Activated naive CD8-positive, alpha-beta T cell treated with anti-CD3 and anti-CD28 coated beads, Interleukin-2, amount 10 ng/mL, durations not matched to agents 7 days and 5 days (primary cell): ENCODE measurements at regions of chr1 and their contacts with region 1.

Region 1: GRCh38 chr1:67194209-67194863 is 28.1 kb downstream of the IL23R start:
- DNase-seq: no peak
- ATAC-seq: peak; percentile 27
- H3K4me3 Mint-ChIP-seq: peak overlapping the region; percentile 43
- H3K27ac Mint-ChIP-seq: peak overlapping the region; percentile 79
- H3K4me1 Mint-ChIP-seq: peaks cover 21% of the 10 kb centered on the region
- H3K27me3 Mint-ChIP-seq: no peaks in the 10 kb centered on the region

Region 2: DNA sequence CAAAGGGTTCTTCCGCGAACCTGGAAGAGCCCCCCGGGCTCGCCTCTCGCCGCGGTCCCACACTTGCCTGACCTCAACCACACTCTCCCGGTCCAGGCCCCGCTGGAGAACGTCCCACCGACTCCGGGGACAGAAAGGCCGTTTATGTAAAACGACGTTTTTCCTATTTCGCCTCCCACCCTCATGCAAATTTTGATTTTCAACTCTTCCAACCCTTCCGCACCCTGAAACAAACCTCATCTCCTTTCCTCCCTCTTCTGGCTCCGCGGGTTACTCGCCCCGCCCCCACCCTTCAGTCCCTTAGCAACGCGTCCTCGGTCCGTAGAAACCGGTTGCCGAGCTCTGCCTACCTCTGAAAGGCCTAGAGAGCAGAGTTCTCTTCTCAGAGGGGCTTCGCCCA is 59.6 kb before region 1 on chr1 and contains the start of gene C1orf141:
- POLR2A ChIA-PET with region 1: no interaction called
- DNase-seq: no peak
- ATAC-seq: peak; percentile 47
- H3K4me3 Mint-ChIP-seq: peak within 1 kb of the TSS; percentile 73
- H3K27ac Mint-ChIP-seq: peak within 1 kb of the TSS; percentile 0
- H3K4me1 Mint-ChIP-seq: peaks cover 10% of the 10 kb centered on the region
- H3K27me3 Mint-ChIP-seq: peaks cover 12% of the 10 kb centered on the region
- total RNA-seq, gene C1orf141: not detected

Region 3: GRCh38 chr1:67211589-67212563 is 17.5 kb after region 1 on chr1:
- POLR2A ChIA-PET with region 1: interaction called, 10 read pairs
- DNase-seq: no peak
- ATAC-seq: peak; percentile 84
- H3K4me3 Mint-ChIP-seq: peak overlapping the region; percentile 59
- H3K27ac Mint-ChIP-seq: peak overlapping the region; percentile 80
- H3K4me1 Mint-ChIP-seq: peaks cover 30% of the 10 kb centered on the region
- H3K27me3 Mint-ChIP-seq: peaks cover 5% of the 10 kb centered on the region